ENCODE measurements at regions of chr19 and their contacts with region 1.

Region 1: GRCh38 chr19:16371540-16371986 is 46.9 kb downstream of the KLF2 start:
- DNase-seq: peak; percentile 80 to 97 (median 93)
- ATAC-seq: peak; percentile 55 to 66 (median 61)
- H3K4me3 ChIP-seq: peak overlapping the region; percentile 44 to 55
- H3K4me3 Mint-ChIP-seq: no peak overlapping the region
- H3K27ac ChIP-seq: peak overlapping the region; percentile 96
- H3K27ac Mint-ChIP-seq: no peak overlapping the region
- H3K4me1 ChIP-seq: peaks cover 78 to 98% of the 10 kb centered on the region in 2 experiments
- H3K4me1 Mint-ChIP-seq: peaks cover 7 to 40% (median 7%) of the 10 kb centered on the region in 3 donors
- H3K27me3 ChIP-seq: no peaks in the 10 kb centered on the region
- H3K27me3 Mint-ChIP-seq: no peaks in the 10 kb centered on the region

Region 2: GRCh38 chr19:16324384-16325160 is 47.0 kb before region 1 on chr19 and contains the start of gene KLF2:
- CTCF ChIA-PET with region 1: interaction called in 1 of 2 experiments, 20 read pairs
- POLR2A ChIA-PET with region 1: interaction called, 38 to 135 read pairs
- DNase-seq: peak; percentile 89 to 99 (median 94)
- ATAC-seq: peak; percentile 71 to 79 (median 72)
- H3K4me3 ChIP-seq: peak within 1 kb of the TSS; percentile 89 to 95
- H3K4me3 Mint-ChIP-seq: peak within 1 kb of the TSS; percentile 62 to 98 (median 66)
- H3K27ac ChIP-seq: peak within 1 kb of the TSS; percentile 95
- H3K27ac Mint-ChIP-seq: peak within 1 kb of the TSS; percentile 75 to 79
- H3K4me1 ChIP-seq: peaks cover 26 to 48% of the 10 kb centered on the region in 2 experiments
- H3K4me1 Mint-ChIP-seq: peaks cover 42 to 59% (median 46%) of the 10 kb centered on the region in 3 donors
- H3K27me3 ChIP-seq: peaks cover 0 to 16% of the 10 kb centered on the region in 2 experiments
- H3K27me3 Mint-ChIP-seq: peaks cover 0 to 5% of the 10 kb centered on the region in 2 donors
- total RNA-seq, gene KLF2: 612 to 721 (median 621) TPM

Region 3: GRCh38 chr19:16330368-16330801 is 41.2 kb before region 1 on chr19:
- CTCF ChIA-PET with region 1: interaction called in 1 of 2 experiments, 20 read pairs
- POLR2A ChIA-PET with region 1: interaction called, 38 to 135 read pairs
- DNase-seq: peak; percentile 88 to 97 (median 94)
- ATAC-seq: peak; percentile 55 to 76 (median 73)
- H3K4me3 ChIP-seq: peak overlapping the region in 1 of 2 donors; percentile 95
- H3K4me3 Mint-ChIP-seq: peak overlapping the region; percentile 98 to 100 (median 99)
- H3K27ac ChIP-seq: peak overlapping the region; percentile 82
- H3K27ac Mint-ChIP-seq: peak overlapping the region; percentile 95 to 98
- H3K4me1 ChIP-seq: peaks cover 18 to 70% of the 10 kb centered on the region in 2 experiments
- H3K4me1 Mint-ChIP-seq: peaks cover 50 to 63% (median 56%) of the 10 kb centered on the region in 3 donors
- H3K27me3 ChIP-seq: peaks cover 0 to 10% of the 10 kb centered on the region in 2 experiments
- H3K27me3 Mint-ChIP-seq: peaks cover 0 to 5% of the 10 kb centered on the region in 2 donors

Region 4: DNA sequence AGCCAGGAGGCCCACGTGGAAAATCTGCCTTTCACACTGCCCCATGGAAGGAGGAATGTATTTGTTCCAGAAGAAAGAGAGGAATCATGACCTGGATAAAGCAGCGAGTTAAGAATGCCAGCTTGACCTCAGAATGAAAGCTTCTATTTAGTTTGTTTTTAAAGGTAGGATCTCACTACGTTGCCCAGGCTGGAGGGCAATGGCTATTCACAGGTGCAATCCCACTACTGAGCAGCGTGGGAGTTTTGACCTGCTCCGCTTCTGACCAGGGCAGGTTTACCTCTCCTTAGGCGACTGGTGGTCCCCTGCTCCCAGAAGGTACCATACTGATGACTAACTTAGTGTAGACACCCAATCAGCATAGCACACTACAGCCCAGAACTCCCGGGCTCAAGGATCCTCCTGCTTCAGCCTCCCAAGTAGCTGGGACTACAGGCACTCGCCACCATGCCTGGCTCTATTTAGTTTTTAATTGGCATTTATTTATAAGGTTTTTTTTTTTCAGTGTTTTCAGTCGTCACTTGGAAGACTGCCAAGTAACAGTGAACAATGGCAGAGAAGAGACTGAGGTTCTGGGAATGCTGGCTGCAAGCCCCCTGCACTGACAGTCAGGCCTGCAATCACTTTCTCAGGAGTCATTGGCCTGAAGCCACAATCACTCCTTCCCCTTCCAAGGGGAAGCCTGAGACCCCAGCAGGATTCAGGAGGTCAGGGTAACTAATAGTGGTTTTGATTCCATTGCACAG is 27.1 kb after region 1 on chr19:
- CTCF ChIA-PET with region 1: no interaction called
- POLR2A ChIA-PET with region 1: interaction called in 1 of 2 experiments, 10 read pairs
- DNase-seq: no peak
- ATAC-seq: no peak
- H3K4me3 ChIP-seq: no peak overlapping the region
- H3K4me3 Mint-ChIP-seq: no peak overlapping the region
- H3K27ac ChIP-seq: peak overlapping the region; percentile 52
- H3K27ac Mint-ChIP-seq: peak overlapping the region; percentile 78 to 89
- H3K4me1 ChIP-seq: peaks cover 0 to 16% of the 10 kb centered on the region in 2 experiments
- H3K4me1 Mint-ChIP-seq: peaks cover 17 to 45% (median 31%) of the 10 kb centered on the region in 3 donors
- H3K27me3 ChIP-seq: no peaks in the 10 kb centered on the region
- H3K27me3 Mint-ChIP-seq: no peaks in the 10 kb centered on the region

Region 5: DNA sequence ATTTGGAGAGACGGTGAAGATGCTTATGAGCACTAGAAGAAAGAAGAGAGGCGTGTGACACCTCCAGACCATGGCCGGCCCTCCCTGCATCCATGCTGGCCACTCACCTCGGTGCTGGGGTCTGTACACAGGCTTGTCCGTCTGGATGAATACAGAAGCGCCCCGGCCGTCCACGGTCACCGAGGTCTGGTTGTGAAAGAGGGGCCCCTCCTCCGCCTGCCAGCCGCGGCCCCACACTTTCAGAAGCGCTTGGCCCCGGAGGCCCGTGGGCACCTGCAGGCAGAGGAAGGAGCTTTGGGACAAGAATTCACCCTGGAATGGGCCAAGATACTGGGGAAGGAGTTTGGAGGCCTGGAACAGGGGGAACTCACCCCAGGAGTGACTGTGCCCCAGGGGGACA is 639.9 kb after region 1 on chr19:
- CTCF ChIA-PET with region 1: no interaction called
- POLR2A ChIA-PET with region 1: no interaction called
- DNase-seq: no peak
- ATAC-seq: no peak
- H3K4me3 ChIP-seq: no peak overlapping the region
- H3K4me3 Mint-ChIP-seq: no peak overlapping the region
- H3K27ac ChIP-seq: no peak overlapping the region
- H3K27ac Mint-ChIP-seq: no peak overlapping the region
- H3K4me1 ChIP-seq: no peaks in the 10 kb centered on the region
- H3K4me1 Mint-ChIP-seq: no peaks in the 10 kb centered on the region
- H3K27me3 ChIP-seq: peaks cover 0 to 20% of the 10 kb centered on the region in 2 experiments
- H3K27me3 Mint-ChIP-seq: no peaks in the 10 kb centered on the region